Activated CD4-positive, alpha-beta memory T cell treated with anti-CD3 and anti-CD28 coated beads, Interleukin-2, amount 10 ng/mL, durations not matched to agents 7 days and 5 days (primary cell): ENCODE measurements at regions of chr6 and their contacts with region 1.

Region 1: DNA sequence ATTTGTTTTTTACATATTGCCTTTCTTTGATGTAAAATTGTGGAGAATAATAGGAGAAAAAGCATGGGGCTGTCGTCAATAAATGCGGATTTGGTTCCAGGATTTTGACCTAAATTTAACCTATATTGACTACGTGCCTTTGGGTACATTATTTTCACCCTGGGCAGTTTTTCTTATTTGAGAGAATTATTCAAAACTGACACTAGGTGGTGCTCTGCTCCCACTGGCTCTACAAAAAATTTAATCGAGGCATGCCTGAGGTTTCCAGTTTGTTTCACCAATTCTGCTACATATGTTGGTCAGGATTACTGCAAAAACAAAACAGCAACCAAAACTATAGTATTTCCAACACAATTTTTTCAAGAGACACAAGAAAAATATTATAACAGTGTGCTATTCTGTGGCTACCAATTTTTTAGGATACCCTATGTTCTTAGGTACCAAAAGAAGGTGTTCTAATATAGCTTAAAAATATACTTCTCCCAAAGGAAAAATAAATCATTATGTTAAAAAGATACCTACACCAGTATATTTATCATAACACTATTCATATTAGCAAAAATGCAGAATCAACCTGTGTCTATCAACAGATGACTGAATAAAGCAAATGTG is 48.6 kb upstream of the FABP7 start:
- DNase-seq: no peak
- H3K4me3 Mint-ChIP-seq: no peak overlapping the region
- H3K27ac Mint-ChIP-seq: no peak overlapping the region
- H3K4me1 Mint-ChIP-seq: no peaks in the 10 kb centered on the region
- H3K27me3 Mint-ChIP-seq: peaks cover 6% of the 10 kb centered on the region

Region 2: DNA sequence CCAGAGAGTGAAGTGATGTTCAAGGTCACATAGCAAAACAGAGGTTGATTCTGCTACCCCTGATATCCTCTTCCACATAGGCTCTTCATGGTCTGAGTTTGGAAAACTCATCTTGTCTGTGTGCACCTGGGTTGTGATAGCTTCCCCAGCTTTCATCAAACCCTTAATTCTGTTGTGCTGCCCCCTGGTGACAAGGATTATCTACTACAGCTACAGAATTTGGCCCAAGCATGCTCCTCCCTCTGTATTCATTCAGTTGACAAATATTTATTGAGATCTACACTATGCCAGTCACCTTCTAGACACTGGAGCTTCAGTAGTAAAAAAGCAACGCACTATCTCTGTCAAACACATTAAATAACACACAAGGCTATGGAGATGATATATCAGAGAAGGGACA is 108.6 kb after region 1 on chr6:
- CTCF ChIA-PET with region 1: interaction called, 40 read pairs
- POLR2A ChIA-PET with region 1: no interaction called
- DNase-seq: peak; percentile 45
- H3K4me3 Mint-ChIP-seq: no peak overlapping the region
- H3K27ac Mint-ChIP-seq: no peak overlapping the region
- H3K4me1 Mint-ChIP-seq: no peaks in the 10 kb centered on the region
- H3K27me3 Mint-ChIP-seq: peaks cover 2% of the 10 kb centered on the region